BJ (cell line): ENCODE measurements at regions of chr1 and their contacts with region 1.

Region 1: GRCh38 chr1:12124693-12125421 is 41.9 kb upstream of the TNFRSF1B start:
- DNase-seq: no peak
- H3K4me3 ChIP-seq: no peak overlapping the region
- H3K27me3 ChIP-seq: peaks cover 5% of the 10 kb centered on the region
- CTCF ChIP-seq: peak; percentile 95

Region 2: DNA sequence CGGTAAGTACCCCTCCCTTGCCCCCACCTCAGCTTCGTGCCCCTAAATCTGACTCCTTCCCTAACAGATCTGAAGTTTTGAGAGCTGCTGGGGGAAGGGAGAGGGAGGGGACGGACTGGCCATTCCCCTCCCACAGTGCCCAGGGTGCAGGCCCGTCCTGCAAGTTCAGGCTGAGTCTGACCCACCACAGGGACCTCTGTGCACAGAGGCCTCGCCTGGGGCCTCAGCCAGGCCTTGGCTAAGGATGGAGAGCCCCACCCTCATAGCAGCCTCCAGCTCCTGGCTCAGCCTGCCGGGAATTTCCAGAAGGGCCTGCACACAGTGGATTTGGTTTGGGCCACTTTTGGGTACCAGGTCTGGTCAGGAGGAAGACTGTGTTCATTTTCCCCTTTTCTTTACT is 10.8 kb after region 1 on chr1:
- CTCF ChIA-PET with region 1: interaction called, 14 read pairs
- POLR2A ChIA-PET with region 1: no interaction called
- DNase-seq: no peak
- H3K4me3 ChIP-seq: no peak overlapping the region
- H3K27me3 ChIP-seq: no peaks in the 10 kb centered on the region
- CTCF ChIP-seq: no peak

Region 3: GRCh38 chr1:12208764-12209494 is 84.1 kb after region 1 on chr1:
- CTCF ChIA-PET with region 1: interaction called, 359 read pairs
- POLR2A ChIA-PET with region 1: no interaction called
- DNase-seq: no peak
- H3K4me3 ChIP-seq: no peak overlapping the region
- H3K27me3 ChIP-seq: no peaks in the 10 kb centered on the region; the same call in 1 of the 2 replicates
- CTCF ChIP-seq: peak; percentile 86

Region 4: GRCh38 chr1:12220890-12221289 is 96.0 kb after region 1 on chr1:
- CTCF ChIA-PET with region 1: interaction called, 41 read pairs
- POLR2A ChIA-PET with region 1: no interaction called
- DNase-seq: no peak
- H3K4me3 ChIP-seq: no peak overlapping the region
- H3K27me3 ChIP-seq: peaks cover 4% of the 10 kb centered on the region
- CTCF ChIP-seq: no peak